Calu3 (cell line): ENCODE measurements at regions of chr13 and their contacts with region 1.

Region 1: GRCh38 chr13:89375839-89376238 is 1704.7 kb downstream of the SLITRK5 start:
- DNase-seq: no peak
- H3K4me3 Mint-ChIP-seq: no peak overlapping the region
- H3K27ac Mint-ChIP-seq: no peak overlapping the region
- H3K4me1 Mint-ChIP-seq: peaks cover 8% of the 10 kb centered on the region
- H3K27me3 Mint-ChIP-seq: no peaks in the 10 kb centered on the region
- CTCF ChIP-seq: no peak

Region 2: GRCh38 chr13:89678466-89679121 is 302.8 kb after region 1 on chr13:
- CTCF ChIA-PET with region 1: no interaction called
- intact Hi-C with region 1: loop called (anchors 10 kb)
- DNase-seq: no peak
- H3K4me3 Mint-ChIP-seq: no peak overlapping the region
- H3K27ac Mint-ChIP-seq: no peak overlapping the region
- H3K4me1 Mint-ChIP-seq: no peaks in the 10 kb centered on the region
- H3K27me3 Mint-ChIP-seq: no peaks in the 10 kb centered on the region
- CTCF ChIP-seq: no peak